ENCODE measurements at regions of chr11 and their contacts with region 1.

Region 1: GRCh38 chr11:119356349-119357031 is 10.0 kb upstream of the MFRP start:
- DNase-seq: peak; percentile 86
- H3K4me3 ChIP-seq: peak overlapping the region; percentile 37 to 51
- H3K27ac ChIP-seq: peak overlapping the region; percentile 89 to 90
- H3K4me1 ChIP-seq: no peaks in the 10 kb centered on the region
- H3K27me3 ChIP-seq: no peaks in the 10 kb centered on the region
- CTCF ChIP-seq: peak; percentile 85 to 94 (median 90)
- POLR2A ChIP-seq: no peak

Region 2: DNA sequence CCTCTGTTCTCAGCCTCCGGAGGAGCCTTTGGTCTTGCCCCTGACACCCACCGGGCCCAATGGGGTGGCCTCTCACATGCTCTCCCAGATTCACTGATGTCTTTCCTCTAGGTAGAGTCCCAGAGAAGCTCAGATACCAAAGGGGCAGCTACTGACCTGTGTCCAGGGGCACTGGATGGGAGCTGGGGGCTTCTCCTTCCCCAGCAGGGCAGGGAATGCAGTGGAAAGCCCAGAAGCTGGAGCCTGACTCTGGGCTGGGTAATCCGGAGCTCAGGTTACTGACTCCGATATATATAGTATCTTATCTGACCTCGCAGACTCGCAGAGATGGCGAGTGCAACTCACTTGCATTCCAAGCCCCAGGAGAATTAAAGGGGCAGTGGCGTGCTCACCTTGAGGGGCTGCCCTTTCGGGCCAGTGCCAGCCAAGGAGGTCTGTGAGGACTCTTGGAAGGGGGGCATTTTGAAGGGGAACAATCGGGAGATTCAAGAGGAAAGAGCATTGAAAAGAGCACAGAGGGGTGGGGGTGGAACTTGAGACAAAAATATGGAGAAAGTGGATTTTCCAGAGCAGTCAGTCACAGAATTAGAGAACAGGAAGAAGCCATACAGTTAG is 22.5 kb after region 1 on chr11:
- intact Hi-C with region 1: loop called (anchors 2 kb)
- DNase-seq: no peak
- H3K4me3 ChIP-seq: no peak overlapping the region
- H3K27ac ChIP-seq: no peak overlapping the region
- H3K4me1 ChIP-seq: peaks cover 6 to 11% of the 10 kb centered on the region in 2 donors
- H3K27me3 ChIP-seq: no peaks in the 10 kb centered on the region
- CTCF ChIP-seq: no peak
- POLR2A ChIP-seq: no peak

Region 3: DNA sequence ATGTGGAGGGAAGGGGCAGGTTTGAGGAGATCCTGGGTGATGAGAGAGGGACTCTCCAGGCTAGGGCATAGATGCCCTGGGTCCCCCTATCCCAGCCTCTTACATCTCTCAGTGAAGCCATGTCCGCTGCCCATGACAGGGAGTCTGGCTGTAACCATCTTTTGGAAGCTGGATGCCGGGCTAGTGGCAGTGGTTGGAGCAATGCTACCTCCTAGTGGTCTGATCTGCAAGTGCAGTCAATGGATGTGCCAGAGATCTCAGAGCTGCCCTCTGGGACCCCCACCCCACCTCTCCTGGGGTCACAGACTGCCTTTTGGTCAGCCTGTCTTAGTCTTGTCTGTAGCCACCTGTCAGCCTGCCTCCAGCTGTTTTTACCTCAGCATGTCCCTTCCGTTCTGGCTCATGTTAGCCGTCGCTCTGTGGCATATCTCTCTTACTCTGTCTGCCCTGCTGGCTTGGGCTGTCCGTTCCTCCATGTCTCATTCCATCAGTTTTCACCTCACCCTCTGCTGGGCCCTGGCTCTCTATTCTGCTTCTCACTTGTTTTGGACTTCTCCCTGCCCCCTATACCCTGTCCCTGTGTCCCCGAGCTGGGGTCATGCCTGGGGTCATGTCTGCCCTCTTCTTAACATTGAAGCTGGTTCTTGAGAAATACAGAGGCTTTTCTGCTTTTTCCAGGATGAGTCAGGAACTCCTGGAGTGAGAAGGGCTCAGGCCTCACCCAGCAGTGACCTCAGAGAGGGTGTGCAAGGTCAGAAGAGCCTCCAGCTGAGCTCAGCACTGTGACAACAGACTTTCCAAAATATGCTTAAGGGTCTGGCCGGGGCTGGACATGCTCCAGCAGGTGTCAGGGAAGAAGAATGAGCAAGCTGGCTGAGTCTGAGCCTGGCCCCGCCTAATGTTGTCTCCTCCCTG is 118.4 kb after region 1 on chr11:
- intact Hi-C with region 1: loop called (anchors 10 kb)
- DNase-seq: peak; percentile 68 to 71
- H3K4me3 ChIP-seq: no peak overlapping the region
- H3K27ac ChIP-seq: peak overlapping the region in 1 of 2 donors; percentile 9
- H3K4me1 ChIP-seq: peaks cover 0 to 6% of the 10 kb centered on the region in 2 donors
- H3K27me3 ChIP-seq: no peaks in the 10 kb centered on the region
- CTCF ChIP-seq: peak; percentile 85 to 95 (median 90)
- POLR2A ChIP-seq: no peak

Measured in uterus (tissue), 4 donors.